GM12878 (cell line): ENCODE measurements at regions of chr19 and their contacts with region 1.

Region 1: GRCh38 chr19:41563854-41564514 is 12.0 kb upstream of the CEACAM21 start:
- DNase-seq: no peak
- ATAC-seq: peak; percentile 29
- H3K4me3 ChIP-seq: no peak overlapping the region
- H3K27ac ChIP-seq: no peak overlapping the region
- H3K4me1 ChIP-seq: peaks cover 17% of the 10 kb centered on the region
- H3K27me3 ChIP-seq: no peaks in the 10 kb centered on the region
- CTCF ChIP-seq: no peak
- EP300 ChIP-seq: no peak
- POLR2A ChIP-seq: no peak
- RAD21 ChIP-seq: no peak

Region 2: DNA sequence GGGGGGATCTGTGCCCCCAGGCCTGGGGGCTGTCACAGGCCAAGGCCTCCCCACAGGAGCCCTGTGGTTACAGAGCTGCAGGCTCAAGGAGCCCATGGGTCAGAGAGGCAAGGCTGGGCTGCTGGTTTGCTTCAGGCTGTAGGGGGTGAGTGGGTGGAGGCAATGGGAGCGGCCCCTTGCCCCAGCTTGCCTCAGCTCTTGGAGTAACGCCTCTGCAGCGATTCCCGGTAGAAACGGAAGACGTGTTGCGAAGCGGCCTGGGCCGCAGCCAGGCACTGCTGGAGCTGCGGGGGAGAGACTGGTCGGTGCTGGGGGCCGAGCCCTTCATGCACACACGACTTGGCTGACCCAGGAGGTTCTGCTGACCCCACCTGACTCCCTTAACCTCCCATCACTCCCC is 177.5 kb before region 1 on chr19:
- CTCF ChIA-PET with region 1: no interaction called
- POLR2A ChIA-PET with region 1: no interaction called
- RAD21 ChIA-PET with region 1: no interaction called
- SMC1A ChIA-PET with region 1: no interaction called
- in situ Hi-C with region 1: no loop called
- intact Hi-C with region 1: no loop called
- DNase-seq: no peak
- ATAC-seq: no peak
- H3K4me3 ChIP-seq: no peak overlapping the region
- H3K27ac ChIP-seq: no peak overlapping the region
- H3K4me1 ChIP-seq: peaks cover 6% of the 10 kb centered on the region; the same call in 1 of the 2 replicates
- H3K27me3 ChIP-seq: no peaks in the 10 kb centered on the region
- CTCF ChIP-seq: no peak
- EP300 ChIP-seq: no peak
- POLR2A ChIP-seq: peak; percentile 34; the same call in 1 of the 2 replicates
- RAD21 ChIP-seq: no peak

Region 3: DNA sequence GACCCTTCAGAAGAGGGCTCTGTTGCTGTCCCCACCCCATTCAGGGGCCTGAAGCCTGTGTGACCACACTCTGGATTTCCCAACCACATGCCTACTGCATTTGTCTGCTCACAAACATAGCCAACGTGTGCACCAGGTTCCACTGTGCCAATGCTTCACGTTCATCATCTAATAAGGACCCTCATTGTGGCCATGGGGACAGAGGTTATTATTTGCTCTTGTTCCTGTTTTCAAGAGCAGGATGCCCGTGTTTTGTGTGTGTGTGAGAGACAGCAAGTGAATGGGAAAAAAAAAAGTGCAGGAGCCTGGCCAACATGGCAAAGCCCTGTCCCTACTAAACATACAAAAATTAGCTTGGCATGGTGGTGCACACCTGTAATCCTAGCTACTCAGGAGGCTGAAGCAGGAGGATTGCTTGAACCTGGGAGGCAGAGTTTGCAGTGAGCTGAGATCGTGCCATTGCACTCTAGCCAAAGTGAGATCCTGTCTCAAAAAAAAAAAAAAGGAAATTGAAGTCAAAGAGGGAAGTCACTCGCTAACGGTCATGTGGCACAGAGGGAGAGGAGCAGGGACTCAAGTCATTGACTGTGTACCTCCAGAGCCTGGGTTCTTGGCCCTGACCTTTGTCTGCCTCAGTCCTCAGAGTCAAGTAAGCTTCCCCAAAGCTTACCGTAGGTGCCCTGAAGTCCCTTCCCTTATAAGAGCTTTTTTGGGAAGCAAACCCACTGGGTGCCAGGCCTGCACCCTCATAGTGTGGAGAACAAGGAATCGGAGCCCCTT is 143.7 kb before region 1 on chr19:
- CTCF ChIA-PET with region 1: no interaction called
- POLR2A ChIA-PET with region 1: no interaction called
- RAD21 ChIA-PET with region 1: no interaction called
- SMC1A ChIA-PET with region 1: no interaction called
- in situ Hi-C with region 1: no loop called
- intact Hi-C with region 1: no loop called
- DNase-seq: no peak
- ATAC-seq: no peak
- H3K4me3 ChIP-seq: no peak overlapping the region
- H3K27ac ChIP-seq: no peak overlapping the region
- H3K4me1 ChIP-seq: no peaks in the 10 kb centered on the region
- H3K27me3 ChIP-seq: no peaks in the 10 kb centered on the region
- CTCF ChIP-seq: no peak
- EP300 ChIP-seq: no peak
- POLR2A ChIP-seq: no peak
- RAD21 ChIP-seq: no peak

Region 4: GRCh38 chr19:41439441-41440222 is 124.4 kb before region 1 on chr19 and contains the start of gene DMAC2:
- CTCF ChIA-PET with region 1: interaction called, 314 read pairs
- POLR2A ChIA-PET with region 1: no interaction called
- RAD21 ChIA-PET with region 1: interaction called, 5 read pairs
- SMC1A ChIA-PET with region 1: no interaction called
- in situ Hi-C with region 1: no loop called
- intact Hi-C with region 1: no loop called
- DNase-seq: peak; percentile 89
- ATAC-seq: peak; percentile 98
- H3K4me3 ChIP-seq: peak within 1 kb of the TSS; percentile 92
- H3K27ac ChIP-seq: peak within 1 kb of the TSS; percentile 85
- H3K4me1 ChIP-seq: no peaks in the 10 kb centered on the region; the same call in 1 of the 2 replicates
- H3K27me3 ChIP-seq: no peaks in the 10 kb centered on the region
- CTCF ChIP-seq: peak; percentile 62 to 78 (median 69)
- EP300 ChIP-seq: no peak
- POLR2A ChIP-seq: peak; percentile 89
- RAD21 ChIP-seq: peak; percentile 41
- polyA plus RNA-seq, gene DMAC2: 10.8 to 14.8 TPM

Region 5: DNA sequence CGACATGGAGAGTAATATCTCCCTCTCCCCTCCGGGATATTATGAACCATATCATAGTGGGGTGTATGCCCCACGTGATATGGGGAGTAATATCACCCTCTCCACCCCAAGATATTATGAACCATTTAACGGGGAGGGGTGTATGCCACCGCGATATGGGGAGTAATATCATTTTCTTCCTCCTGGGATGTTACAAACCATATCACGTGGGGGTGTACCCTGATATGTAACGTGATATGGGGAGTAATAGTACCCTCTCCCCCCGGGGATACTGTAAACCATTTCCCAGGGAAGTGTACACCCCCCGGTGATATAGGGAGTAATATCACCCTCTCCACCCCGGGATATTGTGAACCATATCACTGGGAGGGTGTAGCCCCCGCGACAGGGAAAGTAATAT is 58.9 kb before region 1 on chr19:
- CTCF ChIA-PET with region 1: no interaction called
- POLR2A ChIA-PET with region 1: no interaction called
- RAD21 ChIA-PET with region 1: no interaction called
- SMC1A ChIA-PET with region 1: no interaction called
- in situ Hi-C with region 1: no loop called
- intact Hi-C with region 1: no loop called
- DNase-seq: no peak
- ATAC-seq: no peak
- H3K4me3 ChIP-seq: no peak overlapping the region
- H3K27ac ChIP-seq: no peak overlapping the region
- H3K4me1 ChIP-seq: peaks cover 3% of the 10 kb centered on the region; the same call in 1 of the 2 replicates
- H3K27me3 ChIP-seq: no peaks in the 10 kb centered on the region; a peak in 1 of 4 replicates
- CTCF ChIP-seq: no peak
- EP300 ChIP-seq: no peak
- POLR2A ChIP-seq: no peak
- RAD21 ChIP-seq: no peak

Region 6: GRCh38 chr19:41521931-41522555 is 41.9 kb before region 1 on chr19:
- CTCF ChIA-PET with region 1: interaction called, 5 read pairs
- POLR2A ChIA-PET with region 1: no interaction called
- RAD21 ChIA-PET with region 1: no interaction called
- SMC1A ChIA-PET with region 1: no interaction called
- in situ Hi-C with region 1: no loop called
- intact Hi-C with region 1: loop called (anchors 5 kb)
- DNase-seq: no peak
- ATAC-seq: peak; percentile 71
- H3K4me3 ChIP-seq: peak overlapping the region; percentile 47
- H3K27ac ChIP-seq: peak overlapping the region; percentile 8
- H3K4me1 ChIP-seq: peaks cover 10% of the 10 kb centered on the region
- H3K27me3 ChIP-seq: no peaks in the 10 kb centered on the region
- CTCF ChIP-seq: no peak
- EP300 ChIP-seq: no peak
- POLR2A ChIP-seq: peak; percentile 23; the same call in 1 of the 2 replicates
- RAD21 ChIP-seq: no peak

Region 7: DNA sequence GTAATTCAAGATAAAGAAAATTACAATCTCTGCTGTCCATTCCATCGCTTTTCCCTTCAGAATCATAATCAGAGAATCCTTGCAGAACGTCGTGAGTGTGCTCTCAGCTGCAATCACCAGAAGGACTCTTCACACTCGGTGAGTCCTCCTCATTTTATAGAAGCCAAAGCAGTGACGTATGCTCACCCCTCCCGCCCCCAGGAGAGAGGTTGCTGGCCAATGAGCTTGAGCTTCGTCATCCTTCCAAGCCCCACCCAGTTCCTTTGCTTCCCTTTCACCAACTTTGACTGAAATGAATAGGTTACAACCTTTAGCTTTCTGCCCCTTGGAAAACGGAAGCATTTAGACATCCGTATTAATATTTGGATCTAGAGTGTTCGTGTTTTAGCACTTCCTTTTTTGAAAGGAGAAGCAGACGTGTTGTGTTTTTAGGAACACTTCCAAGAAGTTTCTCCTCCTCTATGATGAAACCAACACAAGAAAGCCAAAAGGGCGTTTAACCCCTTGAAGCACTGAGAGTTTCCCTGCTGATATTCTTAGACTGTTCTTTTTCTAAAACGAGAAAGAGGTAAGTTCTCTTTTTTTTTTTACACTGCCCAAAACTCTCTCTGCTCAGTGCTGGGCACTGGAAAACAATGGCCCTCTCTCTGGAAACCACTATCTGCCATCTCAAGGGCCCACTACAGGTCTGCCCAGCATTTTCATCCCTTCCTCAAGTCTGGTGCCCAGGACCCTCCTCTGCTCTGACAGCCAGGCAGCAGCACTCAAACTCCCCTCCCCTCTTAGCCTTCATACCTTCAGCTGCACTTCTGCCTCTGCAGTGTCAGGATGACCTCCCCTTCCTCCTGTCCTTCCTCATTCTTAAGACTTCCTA is 32.3 kb before region 1 on chr19:
- CTCF ChIA-PET with region 1: interaction called, 549 read pairs
- POLR2A ChIA-PET with region 1: no interaction called
- RAD21 ChIA-PET with region 1: interaction called, 6 read pairs
- SMC1A ChIA-PET with region 1: interaction called, 305 read pairs
- in situ Hi-C with region 1: no loop called
- intact Hi-C with region 1: no loop called
- DNase-seq: no peak
- ATAC-seq: peak; percentile 61
- H3K4me3 ChIP-seq: peak overlapping the region; percentile 65
- H3K27ac ChIP-seq: peak overlapping the region; percentile 76
- H3K4me1 ChIP-seq: peaks cover 56% of the 10 kb centered on the region
- H3K27me3 ChIP-seq: no peaks in the 10 kb centered on the region
- CTCF ChIP-seq: no peak
- EP300 ChIP-seq: no peak
- POLR2A ChIP-seq: peak; percentile 96
- RAD21 ChIP-seq: no peak

Region 8: DNA sequence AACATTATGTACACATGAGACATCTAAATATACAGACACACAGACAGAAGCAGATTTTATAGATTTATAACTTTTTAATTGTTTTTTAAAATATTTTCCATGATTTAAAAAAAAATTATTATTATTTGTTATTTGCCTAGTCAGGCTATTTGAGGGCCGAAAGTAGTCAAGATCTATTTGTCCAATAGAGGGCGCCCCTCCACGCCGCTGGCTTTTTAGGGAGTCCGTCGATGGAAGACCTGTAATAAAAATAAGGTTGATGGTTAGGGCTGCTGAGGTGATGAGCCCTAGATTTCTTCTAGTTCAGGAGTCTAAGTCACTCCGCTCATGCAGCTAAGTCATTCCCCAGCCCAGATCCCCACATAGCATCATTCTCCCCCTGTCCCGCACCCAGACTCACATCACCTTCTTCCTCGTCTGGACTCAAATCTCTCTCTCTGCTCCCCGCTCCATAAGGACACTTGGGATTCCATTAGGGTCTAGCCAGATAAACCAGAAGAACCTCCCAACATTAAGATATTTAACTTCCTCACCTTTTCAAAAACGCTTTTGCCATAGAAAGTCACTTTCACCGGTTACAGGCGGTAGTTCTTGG is 21.9 kb before region 1 on chr19:
- CTCF ChIA-PET with region 1: interaction called, 549 read pairs
- POLR2A ChIA-PET with region 1: interaction called, 14 read pairs
- RAD21 ChIA-PET with region 1: interaction called, 10 read pairs
- SMC1A ChIA-PET with region 1: interaction called, 305 read pairs
- in situ Hi-C with region 1: no loop called
- intact Hi-C with region 1: loop called (anchors 1 kb)
- DNase-seq: no peak
- ATAC-seq: peak; percentile 49; the same call in 2 of the 3 replicates
- H3K4me3 ChIP-seq: no peak overlapping the region
- H3K27ac ChIP-seq: no peak overlapping the region
- H3K4me1 ChIP-seq: peaks cover 26% of the 10 kb centered on the region
- H3K27me3 ChIP-seq: no peaks in the 10 kb centered on the region
- CTCF ChIP-seq: peak; percentile 69 to 74 (median 71)
- EP300 ChIP-seq: no peak
- POLR2A ChIP-seq: no peak
- RAD21 ChIP-seq: peak; percentile 85

Region 9: GRCh38 chr19:41548954-41549688 is 14.9 kb before region 1 on chr19:
- CTCF ChIA-PET with region 1: interaction called, 549 read pairs
- POLR2A ChIA-PET with region 1: interaction called, 14 read pairs
- RAD21 ChIA-PET with region 1: interaction called, 10 read pairs
- SMC1A ChIA-PET with region 1: interaction called, 305 read pairs
- in situ Hi-C with region 1: no loop called
- intact Hi-C with region 1: no loop called
- DNase-seq: no peak
- ATAC-seq: peak; percentile 68
- H3K4me3 ChIP-seq: peak overlapping the region; percentile 83
- H3K27ac ChIP-seq: peak overlapping the region; percentile 96
- H3K4me1 ChIP-seq: peaks cover 36% of the 10 kb centered on the region
- H3K27me3 ChIP-seq: no peaks in the 10 kb centered on the region
- CTCF ChIP-seq: no peak
- EP300 ChIP-seq: no peak
- POLR2A ChIP-seq: peak; percentile 92
- RAD21 ChIP-seq: no peak